ENCODE measurements at regions of chr11 and their contacts with region 1.

Region 1: DNA sequence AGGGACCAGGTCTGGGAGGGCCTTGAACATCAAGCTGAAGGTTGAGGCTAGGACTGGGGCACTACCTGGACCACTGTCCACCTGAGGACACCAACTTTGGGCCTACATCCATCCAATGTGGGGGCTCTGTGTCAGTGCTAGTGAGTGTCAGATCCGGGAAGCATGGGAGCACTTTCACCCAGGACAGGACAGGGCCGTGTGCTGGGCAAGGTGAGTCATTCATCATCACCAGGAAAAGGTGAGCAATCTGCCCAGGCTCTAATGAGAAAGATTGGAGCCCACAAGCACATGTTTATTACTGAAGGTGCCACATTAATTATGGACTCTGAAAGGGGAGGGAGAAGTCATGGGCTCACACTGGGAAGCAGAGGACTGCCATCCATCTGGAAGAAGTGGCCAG is 39.7 kb upstream of the DRD2 start:
- DNase-seq: no peak
- H3K4me3 ChIP-seq: no peak overlapping the region
- H3K27ac ChIP-seq: no peak overlapping the region
- H3K4me1 ChIP-seq: no peaks in the 10 kb centered on the region
- H3K27me3 ChIP-seq: no peaks in the 10 kb centered on the region
- CTCF ChIP-seq: no peak
- POLR2A ChIP-seq: no peak

Region 2: GRCh38 chr11:113474362-113475159 is 40.3 kb before region 1 on chr11:
- intact Hi-C with region 1: loop called (anchors 1 kb)
- DNase-seq: peak; percentile 58 to 84
- H3K4me3 ChIP-seq: peak overlapping the region in 2 of 3 donors; percentile 44 to 55
- H3K27ac ChIP-seq: no peak overlapping the region
- H3K4me1 ChIP-seq: no peaks in the 10 kb centered on the region
- H3K27me3 ChIP-seq: peaks cover 0 to 63% of the 10 kb centered on the region in 2 donors
- CTCF ChIP-seq: no peak
- POLR2A ChIP-seq: no peak

Region 3: DNA sequence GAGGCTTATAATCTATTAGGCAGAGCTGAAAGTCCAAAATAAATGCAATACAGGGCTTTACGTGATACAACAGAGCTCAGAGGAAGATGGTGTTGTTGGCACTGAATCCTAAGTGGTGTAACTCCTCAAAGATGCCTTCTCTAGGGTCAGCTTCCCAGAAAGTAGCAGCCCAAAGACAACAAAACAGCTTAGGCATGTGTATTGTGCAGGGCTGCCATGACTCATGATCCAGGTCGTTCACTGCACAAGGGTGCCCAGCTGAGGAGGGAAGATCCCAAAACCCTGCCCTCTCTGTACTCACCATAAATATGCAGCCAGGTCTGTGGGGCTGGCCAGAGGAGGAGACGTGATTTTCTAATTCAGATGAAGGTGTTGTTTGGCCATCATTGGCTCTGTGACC is 722.0 kb after region 1 on chr11:
- intact Hi-C with region 1: loop called (anchors 5 kb)
- DNase-seq: no peak
- H3K4me3 ChIP-seq: no peak overlapping the region
- H3K27ac ChIP-seq: no peak overlapping the region
- H3K4me1 ChIP-seq: no peaks in the 10 kb centered on the region
- H3K27me3 ChIP-seq: no peaks in the 10 kb centered on the region
- CTCF ChIP-seq: no peak
- POLR2A ChIP-seq: no peak